ENCODE measurements at regions of chr17 and their contacts with region 1.

Region 1: DNA sequence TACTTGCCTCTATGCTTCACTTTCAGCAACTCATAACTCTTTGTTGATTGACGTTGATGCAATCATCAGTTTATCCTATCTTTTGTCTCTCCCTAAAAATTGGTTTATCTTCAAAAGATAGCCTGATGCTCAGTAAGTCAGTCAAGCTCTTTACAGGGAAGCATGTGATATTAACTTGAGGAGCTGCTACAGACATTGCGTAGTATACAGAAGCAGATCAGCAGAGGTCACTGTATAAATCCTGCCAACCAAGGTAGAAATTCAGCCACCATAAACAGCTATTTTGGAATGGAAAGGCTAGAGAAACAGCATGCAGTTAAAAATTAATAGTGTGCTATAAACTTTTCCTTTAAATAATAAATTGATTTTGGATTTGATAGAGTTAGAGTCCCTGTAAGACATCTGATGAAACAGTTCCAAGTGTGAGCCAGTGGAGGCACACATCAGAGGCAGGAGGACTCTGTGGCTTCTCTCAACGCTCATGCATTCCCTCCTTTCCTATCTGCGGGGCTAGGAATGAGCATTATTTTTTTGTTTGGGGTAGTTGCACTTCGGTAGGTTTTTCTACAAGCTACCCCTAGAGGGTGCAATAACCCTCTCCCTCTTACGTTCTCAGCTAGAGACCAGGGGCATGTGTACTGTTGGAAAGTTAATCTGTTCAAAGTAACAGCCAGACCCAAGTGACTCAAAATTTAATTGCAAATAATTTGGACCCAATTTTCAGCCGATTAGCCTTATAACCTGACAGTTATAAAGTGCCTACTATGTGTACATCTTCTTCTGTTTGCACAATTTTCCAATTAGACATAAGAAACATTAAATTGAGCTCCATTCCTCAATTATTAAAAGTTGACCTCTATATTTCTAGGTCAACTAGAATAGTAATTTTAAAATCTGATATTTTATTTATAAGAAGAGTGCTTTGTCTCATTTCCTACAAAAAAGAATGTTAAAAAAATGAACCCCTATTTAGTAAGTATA is 647.7 kb upstream of the SOX9 start:
- DNase-seq: peak; percentile 2 to 4
- H3K4me3 ChIP-seq: no peak overlapping the region
- H3K27ac ChIP-seq: no peak overlapping the region
- H3K4me1 ChIP-seq: no peaks in the 10 kb centered on the region
- H3K27me3 ChIP-seq: no peaks in the 10 kb centered on the region
- CTCF ChIP-seq: peak in 5 of 6 experiments; percentile 33 to 71 (median 66)
- POLR2A ChIP-seq: no peak

Region 2: GRCh38 chr17:71316176-71316897 is 156.8 kb before region 1 on chr17:
- intact Hi-C with region 1: no loop called
- DNase-seq: no peak
- H3K4me3 ChIP-seq: no peak overlapping the region
- H3K27ac ChIP-seq: no peak overlapping the region
- H3K4me1 ChIP-seq: no peaks in the 10 kb centered on the region
- H3K27me3 ChIP-seq: no peaks in the 10 kb centered on the region
- CTCF ChIP-seq: no peak
- POLR2A ChIP-seq: no peak

Region 3: GRCh38 chr17:72120642-72121163 is 647.6 kb after region 1 on chr17 and contains the start of gene SOX9:
- intact Hi-C with region 1: loop called (anchors 5 kb)
- DNase-seq: peak; percentile 96
- H3K4me3 ChIP-seq: peak within 1 kb of the TSS; percentile 81 to 83 (median 83)
- H3K27ac ChIP-seq: peak within 1 kb of the TSS; percentile 91 to 97 (median 95)
- H3K4me1 ChIP-seq: peaks cover 25 to 35% of the 10 kb centered on the region in 2 donors
- H3K27me3 ChIP-seq: no peaks in the 10 kb centered on the region
- CTCF ChIP-seq: no peak
- POLR2A ChIP-seq: peak; percentile 84 to 99
- total RNA-seq, gene SOX9: 15.5 to 32.6 (median 23.3) TPM

Region 4: DNA sequence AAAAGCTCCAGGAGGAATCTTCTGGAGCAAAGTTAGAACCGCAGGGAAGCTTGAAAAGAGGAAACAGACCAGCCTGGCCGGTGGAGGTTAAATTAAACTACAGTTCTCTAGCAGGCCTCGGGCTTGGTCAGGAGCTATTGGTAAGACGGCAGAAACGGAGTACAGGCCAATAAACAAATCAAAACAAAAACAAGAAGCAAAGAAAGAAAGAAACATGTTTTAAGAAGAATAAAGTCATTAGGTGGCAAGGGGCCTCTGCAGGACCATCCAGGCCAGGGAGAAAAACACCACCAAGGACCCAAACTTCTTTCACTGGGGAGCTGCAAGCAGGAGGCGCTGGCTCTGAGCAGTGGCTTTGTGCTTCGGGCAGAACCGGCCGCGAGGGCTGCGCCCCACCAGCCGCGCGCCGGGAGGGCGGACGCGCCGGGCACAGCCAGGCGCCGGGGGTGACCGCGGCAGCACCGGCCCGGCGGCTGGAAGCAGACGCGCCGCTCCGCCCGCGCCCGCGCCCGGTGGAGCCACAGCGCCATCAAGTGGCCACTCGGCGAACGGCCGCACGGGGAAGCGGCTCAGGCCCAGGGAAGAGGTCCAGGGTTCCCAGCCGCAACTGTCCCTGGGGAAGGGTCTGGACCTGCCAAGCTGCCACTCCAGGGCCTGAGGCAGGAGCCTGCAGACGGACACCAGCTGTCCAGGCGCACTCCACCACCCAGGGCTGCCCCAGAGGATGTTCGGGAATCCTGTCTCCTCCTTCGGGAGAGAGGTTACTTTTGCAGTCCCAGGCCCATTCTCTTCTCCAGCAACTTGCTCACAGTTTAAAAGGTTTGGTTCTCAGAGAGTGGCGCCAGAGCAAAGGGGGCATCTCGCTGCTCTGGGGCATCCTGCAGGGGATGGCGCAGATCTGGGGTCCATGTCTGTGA is 1067.1 kb after region 1 on chr17:
- intact Hi-C with region 1: loop called (anchors 5 kb)
- DNase-seq: peak; percentile 81 to 83
- H3K4me3 ChIP-seq: no peak overlapping the region
- H3K27ac ChIP-seq: peak overlapping the region; percentile 66 to 68 (median 68)
- H3K4me1 ChIP-seq: peaks cover 12 to 16% of the 10 kb centered on the region in 2 donors
- H3K27me3 ChIP-seq: no peaks in the 10 kb centered on the region
- CTCF ChIP-seq: peak; percentile 50 to 100 (median 94)
- POLR2A ChIP-seq: peak in 1 of 2 donors; percentile 50